Activated B cell treated with CpG ODN at 0.5 μM for 24 hours (primary cell): ENCODE measurements at regions of chr15 and their contacts with region 1.

Region 1: DNA sequence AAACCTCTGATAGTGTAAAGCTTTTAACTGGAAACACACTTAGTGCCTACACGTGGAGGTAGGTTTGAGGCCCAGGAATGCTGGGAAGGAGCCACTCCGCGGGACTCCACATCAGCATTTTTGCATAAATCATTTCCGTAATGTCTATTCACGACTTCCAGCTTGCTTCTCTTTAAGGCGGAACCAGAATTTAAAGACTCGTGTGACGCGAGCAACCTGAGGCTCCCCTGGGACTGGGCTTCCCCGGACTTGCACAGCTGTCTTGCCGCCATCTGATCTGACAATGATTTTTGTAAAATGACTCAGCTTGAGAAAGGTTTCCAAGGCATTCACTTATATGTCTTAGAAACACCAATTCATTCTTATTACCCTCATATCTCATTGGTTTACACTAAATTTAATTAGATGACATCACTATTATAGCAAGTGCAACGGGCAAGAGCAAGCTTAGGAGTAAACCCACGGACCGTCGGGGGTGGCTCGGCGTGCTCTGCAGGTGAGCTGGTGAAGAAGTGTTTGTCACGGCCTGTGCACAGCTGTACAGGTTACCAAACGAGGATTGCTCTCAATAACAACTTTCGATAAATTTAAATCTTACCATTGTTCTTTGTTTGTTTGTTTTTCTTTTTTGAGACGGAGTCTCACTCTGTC is 95.2 kb downstream of the CHSY1 start:
- DNase-seq: peak; percentile 56
- ATAC-seq: peak; percentile 92
- H3K4me3 Mint-ChIP-seq: peak overlapping the region; percentile 55
- H3K27ac Mint-ChIP-seq: peak overlapping the region; percentile 25
- H3K4me1 Mint-ChIP-seq: peaks cover 24% of the 10 kb centered on the region
- H3K27me3 Mint-ChIP-seq: no peaks in the 10 kb centered on the region
- CTCF ChIP-seq: no peak

Region 2: DNA sequence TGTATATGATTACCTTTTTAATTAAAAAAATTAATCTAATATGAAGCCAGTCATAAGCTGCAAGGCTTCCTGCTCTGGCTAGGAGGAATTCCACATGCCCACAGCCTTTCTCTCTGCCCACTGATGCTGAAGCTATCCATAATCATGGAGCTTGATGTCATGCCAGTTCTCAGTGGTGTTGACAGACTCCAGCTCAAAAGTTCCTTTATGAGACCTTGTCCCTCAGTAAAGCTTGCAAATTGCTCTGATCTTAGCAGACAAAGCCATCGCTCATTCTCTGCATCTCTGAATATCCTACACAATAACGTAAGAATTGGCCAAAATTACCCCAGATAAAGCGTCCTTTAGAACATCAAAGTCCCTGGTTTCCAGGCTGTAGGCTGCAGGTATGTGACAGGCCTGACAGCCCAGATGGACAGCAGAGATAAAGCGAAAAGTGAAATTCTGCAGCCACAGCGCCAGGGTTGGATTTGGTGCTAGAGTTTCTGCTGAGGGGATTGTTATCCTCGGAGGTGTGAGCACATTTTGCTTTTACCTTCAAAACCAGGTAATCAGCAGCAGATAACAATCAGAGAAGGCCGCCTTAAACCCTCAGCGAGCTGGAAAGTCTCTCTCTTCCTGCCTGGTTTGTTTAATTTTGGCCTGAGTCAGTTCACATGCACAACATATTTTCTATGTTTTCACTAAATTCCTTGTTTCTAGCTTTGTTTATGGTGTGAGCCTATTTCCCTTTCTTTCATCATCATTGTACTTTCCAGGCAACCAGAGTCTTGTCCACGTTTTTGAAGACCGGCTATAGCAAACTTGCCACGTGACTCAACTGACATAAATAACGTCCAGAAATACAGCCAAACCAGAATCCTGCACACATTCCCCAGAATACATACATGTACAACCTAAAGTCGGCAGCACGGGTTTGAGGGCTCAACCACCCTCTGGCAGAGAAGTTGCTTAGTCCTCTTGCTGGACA is 313.6 kb before region 1 on chr15:
- CTCF ChIA-PET with region 1: no interaction called
- POLR2A ChIA-PET with region 1: no interaction called
- intact Hi-C with region 1: no loop called
- DNase-seq: no peak
- ATAC-seq: no peak
- H3K4me3 Mint-ChIP-seq: no peak overlapping the region
- H3K27ac Mint-ChIP-seq: no peak overlapping the region
- H3K4me1 Mint-ChIP-seq: no peaks in the 10 kb centered on the region
- H3K27me3 Mint-ChIP-seq: peaks cover 18% of the 10 kb centered on the region
- CTCF ChIP-seq: no peak

Region 3: GRCh38 chr15:101088788-101089583 is 67.6 kb before region 1 on chr15:
- CTCF ChIA-PET with region 1: no interaction called
- POLR2A ChIA-PET with region 1: no interaction called
- intact Hi-C with region 1: loop called (anchors 2 kb)
- DNase-seq: peak; percentile 86
- ATAC-seq: peak; percentile 98
- H3K4me3 Mint-ChIP-seq: no peak overlapping the region
- H3K27ac Mint-ChIP-seq: no peak overlapping the region
- H3K4me1 Mint-ChIP-seq: no peaks in the 10 kb centered on the region
- H3K27me3 Mint-ChIP-seq: no peaks in the 10 kb centered on the region
- CTCF ChIP-seq: peak; percentile 52

Region 4: DNA sequence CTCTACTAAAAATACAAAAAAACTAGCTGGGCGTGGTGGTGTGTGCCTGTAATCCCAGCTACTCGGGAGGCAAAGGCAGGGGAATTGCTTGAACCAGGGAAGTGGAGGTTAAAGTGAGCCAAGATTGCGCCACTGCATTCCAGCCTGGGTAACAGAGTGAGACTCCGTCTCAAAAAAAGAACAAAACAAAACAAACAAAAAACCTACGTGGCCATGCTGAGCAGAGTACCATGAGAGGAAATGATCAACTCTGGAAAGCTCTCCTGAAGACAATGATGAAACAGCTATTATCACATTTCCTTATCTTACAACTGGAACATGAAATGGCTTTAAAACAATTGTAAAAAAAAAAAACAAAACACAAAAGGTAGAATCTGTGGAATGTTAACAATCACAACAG is 20.0 kb after region 1 on chr15:
- CTCF ChIA-PET with region 1: no interaction called
- POLR2A ChIA-PET with region 1: no interaction called
- intact Hi-C with region 1: no loop called
- DNase-seq: no peak
- ATAC-seq: no peak
- H3K4me3 Mint-ChIP-seq: no peak overlapping the region
- H3K27ac Mint-ChIP-seq: no peak overlapping the region
- H3K4me1 Mint-ChIP-seq: peaks cover 24% of the 10 kb centered on the region
- H3K27me3 Mint-ChIP-seq: no peaks in the 10 kb centered on the region
- CTCF ChIP-seq: no peak

Region 5: GRCh38 chr15:101188637-101189408 is 32.2 kb after region 1 on chr15:
- CTCF ChIA-PET with region 1: no interaction called
- POLR2A ChIA-PET with region 1: no interaction called
- intact Hi-C with region 1: loop called (anchors 1 kb)
- DNase-seq: no peak
- ATAC-seq: peak; percentile 50
- H3K4me3 Mint-ChIP-seq: no peak overlapping the region
- H3K27ac Mint-ChIP-seq: no peak overlapping the region
- H3K4me1 Mint-ChIP-seq: peaks cover 31% of the 10 kb centered on the region
- H3K27me3 Mint-ChIP-seq: no peaks in the 10 kb centered on the region
- CTCF ChIP-seq: no peak